Heart right ventricle (tissue), 16 donors: ENCODE measurements at regions of chr2 and their contacts with region 1.

Region 1: GRCh38 chr2:127064642-127065250 is 42.2 kb downstream of the BIN1 start:
- DNase-seq: peak; percentile 86 to 87
- ATAC-seq: peak; percentile 86 to 93 (median 89)
- H3K4me3 ChIP-seq: peak overlapping the region in 2 of 10 donors; percentile 5 to 22
- H3K27ac ChIP-seq: peak overlapping the region in 9 of 10 donors; percentile 38 to 76 (median 63)
- H3K4me1 ChIP-seq: peaks cover 0 to 55% (median 33%) of the 10 kb centered on the region in 9 donors
- H3K27me3 ChIP-seq: no peaks in the 10 kb centered on the region
- CTCF ChIP-seq: peak in 2 of 9 donors; percentile 11 to 21

Region 2: GRCh38 chr2:127106951-127107621 is 42.3 kb after region 1 on chr2 and contains the start of gene BIN1:
- intact Hi-C with region 1: loop called in 2 of 10 experiments (anchors 5 kb)
- DNase-seq: peak; percentile 86 to 90
- ATAC-seq: peak; percentile 85 to 90 (median 88)
- H3K4me3 ChIP-seq: peak within 1 kb of the TSS; percentile 51 to 84 (median 74)
- H3K27ac ChIP-seq: peak within 1 kb of the TSS in 9 of 10 donors; percentile 50 to 87 (median 74)
- H3K4me1 ChIP-seq: peaks cover 0 to 41% (median 15%) of the 10 kb centered on the region in 9 donors
- H3K27me3 ChIP-seq: peaks cover 0 to 14% (median 0%) of the 10 kb centered on the region in 7 donors
- CTCF ChIP-seq: no peak
- total RNA-seq, gene BIN1: 11.9 to 21.7 (median 16.5) TPM

Region 3: DNA sequence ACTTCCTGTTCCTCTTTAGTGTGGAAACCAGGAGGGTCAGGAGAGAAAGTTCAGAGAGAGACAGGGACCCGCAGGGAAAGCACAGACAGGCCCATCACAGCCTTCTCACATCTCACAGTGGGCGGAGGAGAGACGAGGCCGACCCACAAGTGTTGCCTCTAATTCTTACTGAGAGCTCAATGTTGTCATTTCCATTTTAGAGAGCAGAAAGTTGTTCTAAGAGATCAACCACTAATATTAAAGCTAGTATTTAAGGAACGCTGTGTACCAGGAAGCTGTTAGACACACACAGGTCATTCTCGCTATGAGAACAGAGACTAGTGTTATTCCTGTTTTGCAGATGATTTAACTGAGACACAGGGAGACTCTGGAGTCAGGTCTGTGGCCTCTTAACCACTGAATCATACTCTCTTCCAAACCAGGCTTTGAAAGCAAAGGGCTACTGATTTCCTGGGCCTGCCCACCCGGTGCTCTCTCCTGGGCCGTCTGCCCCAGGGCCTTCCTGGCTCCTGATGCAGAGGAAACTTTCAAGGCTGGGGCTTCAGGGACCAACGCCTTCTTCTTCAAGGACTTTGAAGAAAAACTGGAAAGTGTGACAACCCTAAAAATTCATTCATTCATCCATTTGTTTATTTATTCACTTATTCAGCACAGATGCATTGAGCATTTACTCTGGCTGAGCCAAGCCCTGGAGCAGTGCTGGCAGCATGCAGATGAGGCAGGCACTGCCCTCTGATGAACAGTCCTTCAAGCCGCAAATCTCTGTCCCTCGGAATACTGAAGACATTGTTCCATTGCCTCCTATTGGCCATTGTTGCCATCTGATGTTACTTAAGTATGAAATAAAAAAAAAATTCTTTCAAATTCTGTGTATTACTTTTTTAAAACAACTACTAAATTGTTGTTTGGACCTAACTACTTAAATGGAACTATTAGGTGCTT is 79.4 kb after region 1 on chr2:
- intact Hi-C with region 1: no loop called
- DNase-seq: no peak
- ATAC-seq: peak in 6 of 8 donors; percentile 18 to 84 (median 46)
- H3K4me3 ChIP-seq: no peak overlapping the region
- H3K27ac ChIP-seq: peak overlapping the region in 7 of 10 donors; percentile 4 to 69 (median 29)
- H3K4me1 ChIP-seq: peaks cover 0 to 40% (median 26%) of the 10 kb centered on the region in 9 donors
- H3K27me3 ChIP-seq: peaks cover 0 to 24% (median 13%) of the 10 kb centered on the region in 7 donors
- CTCF ChIP-seq: no peak

Region 4: DNA sequence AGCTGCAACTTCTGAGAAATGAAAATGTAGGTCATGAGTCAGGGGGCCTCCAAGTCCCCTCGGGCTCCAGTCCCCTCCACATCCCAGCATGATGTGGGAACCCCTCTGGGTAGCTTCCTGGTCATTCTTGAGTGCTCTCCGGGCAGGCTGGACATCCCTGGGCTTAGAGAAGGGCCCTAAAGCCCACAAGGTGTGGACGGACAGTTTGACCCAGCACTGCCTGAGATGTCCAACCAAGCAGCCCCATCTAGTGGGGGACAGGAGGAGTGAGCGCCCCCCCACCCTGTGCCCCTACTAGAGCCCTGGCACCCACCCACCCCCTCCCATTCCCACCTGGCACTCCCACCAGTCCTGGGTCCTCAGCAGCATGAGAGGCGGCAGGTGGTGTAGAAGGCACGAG is 109.4 kb after region 1 on chr2:
- intact Hi-C with region 1: loop called in 1 of 10 experiments (anchors 10 kb)
- DNase-seq: peak in 1 of 2 donors; percentile 21
- ATAC-seq: peak in 5 of 8 donors; percentile 9 to 63 (median 47)
- H3K4me3 ChIP-seq: no peak overlapping the region
- H3K27ac ChIP-seq: no peak overlapping the region
- H3K4me1 ChIP-seq: peaks cover 0 to 43% (median 25%) of the 10 kb centered on the region in 9 donors
- H3K27me3 ChIP-seq: peaks cover 0 to 9% (median 0%) of the 10 kb centered on the region in 7 donors
- CTCF ChIP-seq: peak in 6 of 9 donors; percentile 27 to 51 (median 40)

Region 5: DNA sequence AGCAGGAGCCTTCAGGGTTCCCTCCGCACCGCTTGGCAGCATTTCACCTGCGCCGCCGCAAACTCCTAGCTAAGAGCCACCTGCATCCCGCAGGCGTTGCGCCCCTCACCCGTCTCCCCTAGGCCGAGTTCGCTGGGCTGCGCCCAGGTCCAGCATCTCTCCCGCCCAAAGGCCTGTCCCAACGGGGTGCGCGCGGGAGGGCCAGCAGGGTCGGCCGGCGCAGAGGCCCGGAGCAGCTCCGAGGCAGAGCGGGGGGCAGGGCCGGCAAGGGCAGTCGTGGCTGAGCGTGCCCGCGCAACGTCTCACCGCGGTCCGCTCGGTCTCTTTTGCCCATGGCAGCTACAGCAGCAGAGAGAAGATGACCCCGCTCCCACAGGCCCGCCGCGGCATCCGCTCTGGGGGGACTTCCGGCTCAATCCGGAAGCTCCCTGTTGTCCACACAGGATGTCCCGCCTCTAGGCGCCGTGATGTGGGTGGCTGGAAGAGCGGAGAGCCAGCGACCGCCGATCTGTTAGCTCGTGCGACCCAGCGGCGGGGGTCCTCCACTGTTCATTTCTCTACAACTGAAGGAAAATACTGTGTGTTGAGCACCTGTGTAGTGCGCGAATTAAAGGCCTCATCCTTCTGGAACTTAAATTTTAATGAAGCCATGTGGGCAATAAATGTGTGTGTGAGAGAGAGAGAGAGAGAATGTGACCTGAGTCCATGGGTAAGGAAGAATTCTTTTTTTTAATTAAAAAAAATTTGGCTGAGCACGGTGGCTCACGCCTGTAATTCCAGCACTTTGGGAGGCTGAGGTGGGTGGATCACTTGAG is 229.2 kb after region 1 on chr2 and contains the start of gene ERCC3:
- intact Hi-C with region 1: loop called in 2 of 10 experiments (anchors 10 kb)
- DNase-seq: peak; percentile 88 to 90
- ATAC-seq: peak; percentile 93 to 98 (median 98)
- H3K4me3 ChIP-seq: peak within 1 kb of the TSS; percentile 69 to 99 (median 95)
- H3K27ac ChIP-seq: peak within 1 kb of the TSS; percentile 44 to 92 (median 80)
- H3K4me1 ChIP-seq: peaks cover 4 to 25% (median 13%) of the 10 kb centered on the region in 9 donors
- H3K27me3 ChIP-seq: no peaks in the 10 kb centered on the region
- CTCF ChIP-seq: peak in 1 of 9 donors; percentile 9
- total RNA-seq, gene ERCC3: 19.8 to 27.4 (median 23.6) TPM